Posterior vena cava (tissue), 2 donors: ENCODE measurements at regions of chr3 and their contacts with region 1.

Region 1: DNA sequence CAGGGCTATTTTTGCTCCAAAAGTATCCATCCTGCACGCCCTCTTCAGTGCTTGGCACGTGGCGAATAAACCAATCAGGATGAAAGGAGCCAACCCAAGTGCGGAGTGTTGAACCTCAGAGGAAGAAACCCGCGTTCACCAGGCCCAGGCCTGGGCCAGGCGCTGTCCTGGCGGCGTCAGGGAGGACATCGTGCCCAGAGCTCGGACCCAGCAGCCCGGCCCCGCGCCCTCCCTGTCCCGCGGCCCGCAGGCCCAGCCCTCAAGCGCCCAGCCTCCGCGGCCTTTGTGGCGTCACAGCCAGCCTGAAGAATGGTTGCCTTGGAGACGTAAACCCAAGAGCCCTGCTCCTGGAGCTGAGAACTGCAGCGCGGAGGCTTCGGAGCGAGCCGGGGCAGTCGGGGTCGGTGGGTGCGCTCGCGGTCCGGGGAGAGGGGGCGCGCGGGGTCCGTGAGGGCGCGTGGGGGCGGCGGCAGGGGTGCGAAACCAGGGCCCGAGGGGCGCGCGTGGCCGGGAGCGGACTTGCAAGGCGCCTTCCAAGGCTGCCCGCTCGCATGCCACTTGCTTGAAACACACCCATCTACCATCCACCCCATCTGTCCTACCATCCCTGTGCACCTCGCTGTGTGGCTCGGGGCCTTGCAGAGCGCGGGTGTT is at the start of gene CFAP100:
- DNase-seq: no peak
- total RNA-seq, gene CFAP100: not detected

Region 2: GRCh38 chr3:126134219-126134975 is 260.3 kb before region 1 on chr3:
- intact Hi-C with region 1: loop called (anchors 5 kb)
- DNase-seq: peak; percentile 88

Region 3: DNA sequence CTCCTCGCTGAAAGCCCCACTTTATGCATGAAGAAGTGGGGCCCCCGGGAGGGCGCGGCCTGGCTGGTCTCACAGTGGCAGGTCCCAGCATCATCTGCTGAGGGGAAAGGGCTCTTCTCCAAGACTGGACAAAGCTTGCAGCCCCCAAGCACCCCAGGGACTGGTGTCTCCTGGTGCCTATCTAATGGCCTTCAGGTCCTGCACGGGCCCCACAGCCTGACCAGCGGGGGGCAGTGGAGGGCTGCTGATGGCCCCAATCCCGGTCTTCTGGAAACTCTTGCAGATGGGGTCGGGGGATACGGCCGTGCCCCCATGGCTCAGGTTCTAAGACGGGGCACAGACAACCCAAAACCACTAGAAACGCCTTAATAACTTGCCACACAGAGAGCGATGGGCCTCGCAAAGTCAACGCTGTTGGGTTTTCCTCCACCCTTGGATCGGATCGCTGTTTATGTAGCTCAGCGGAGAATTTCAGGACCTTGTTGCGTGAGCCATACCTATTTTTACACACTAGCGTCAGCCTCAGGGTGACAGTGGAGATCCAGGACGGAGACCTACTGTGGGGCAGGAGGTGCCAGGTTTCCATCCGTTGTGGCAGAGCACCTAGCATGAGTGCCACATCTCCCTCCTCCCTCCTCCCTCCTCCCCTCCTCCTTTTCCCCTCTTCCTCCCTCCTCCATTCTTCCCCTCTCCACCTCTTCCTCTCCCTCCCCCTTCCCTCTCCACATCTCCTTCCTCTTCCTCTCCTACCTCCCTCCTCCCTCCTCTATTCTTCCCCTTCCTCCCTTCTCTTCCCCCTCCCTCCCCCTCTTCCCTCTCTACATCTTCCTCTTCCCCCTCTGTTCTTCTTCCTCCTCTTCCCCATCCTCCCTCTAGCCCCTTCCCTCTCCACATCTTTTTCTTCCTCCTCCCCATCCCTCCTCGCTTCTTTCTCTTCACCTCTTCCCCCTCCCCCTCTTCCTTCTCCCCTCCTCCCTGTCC is 135.0 kb before region 1 on chr3:
- intact Hi-C with region 1: loop called in 1 of 2 experiments (anchors 5 kb)
- DNase-seq: no peak

Region 4: DNA sequence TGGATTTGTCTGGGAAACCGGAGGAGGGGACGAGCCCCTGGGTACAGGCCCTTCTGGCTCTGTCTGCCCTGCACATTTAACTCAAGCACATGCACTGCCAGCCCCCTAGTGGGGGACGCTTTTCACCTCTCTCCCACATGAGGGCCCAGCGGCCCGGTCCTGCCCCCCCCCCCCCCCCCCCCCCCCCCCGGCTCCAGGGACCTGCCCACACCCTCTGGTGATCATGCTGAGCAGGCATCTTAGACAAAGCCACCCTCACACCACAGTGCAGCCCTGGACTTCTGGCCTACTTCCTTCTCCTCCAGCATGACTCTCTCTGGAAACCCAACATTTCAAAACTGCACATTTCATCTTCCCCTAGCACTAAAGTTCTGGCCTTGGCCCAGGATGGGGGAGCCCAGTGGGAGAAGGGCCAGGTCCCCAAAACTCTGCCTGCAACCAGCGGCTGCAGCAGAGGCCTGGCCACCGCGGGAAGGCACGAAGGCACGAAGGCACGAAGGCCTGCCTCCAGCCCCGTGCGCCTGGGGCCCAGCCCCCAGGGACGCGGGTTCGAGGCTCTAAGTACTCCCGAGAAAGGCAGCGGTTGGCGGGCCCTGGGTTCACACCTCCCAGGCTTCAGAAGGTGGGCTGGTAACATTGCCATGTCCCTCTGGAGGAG is 51.6 kb before region 1 on chr3:
- intact Hi-C with region 1: no loop called
- DNase-seq: peak; percentile 68

Region 5: GRCh38 chr3:126357295-126358037 is 37.2 kb before region 1 on chr3 and contains the start of gene KLF15:
- intact Hi-C with region 1: loop called in 1 of 2 experiments (anchors 1 kb)
- DNase-seq: peak; percentile 95
- total RNA-seq, gene KLF15: 10.6 to 15.5 TPM

Region 6: GRCh38 chr3:126567696-126568438 is 173.2 kb after region 1 on chr3:
- intact Hi-C with region 1: no loop called
- DNase-seq: peak; percentile 38